MCF 10A (cell line): ENCODE measurements at regions of chr15 and their contacts with region 1.

Region 1: DNA sequence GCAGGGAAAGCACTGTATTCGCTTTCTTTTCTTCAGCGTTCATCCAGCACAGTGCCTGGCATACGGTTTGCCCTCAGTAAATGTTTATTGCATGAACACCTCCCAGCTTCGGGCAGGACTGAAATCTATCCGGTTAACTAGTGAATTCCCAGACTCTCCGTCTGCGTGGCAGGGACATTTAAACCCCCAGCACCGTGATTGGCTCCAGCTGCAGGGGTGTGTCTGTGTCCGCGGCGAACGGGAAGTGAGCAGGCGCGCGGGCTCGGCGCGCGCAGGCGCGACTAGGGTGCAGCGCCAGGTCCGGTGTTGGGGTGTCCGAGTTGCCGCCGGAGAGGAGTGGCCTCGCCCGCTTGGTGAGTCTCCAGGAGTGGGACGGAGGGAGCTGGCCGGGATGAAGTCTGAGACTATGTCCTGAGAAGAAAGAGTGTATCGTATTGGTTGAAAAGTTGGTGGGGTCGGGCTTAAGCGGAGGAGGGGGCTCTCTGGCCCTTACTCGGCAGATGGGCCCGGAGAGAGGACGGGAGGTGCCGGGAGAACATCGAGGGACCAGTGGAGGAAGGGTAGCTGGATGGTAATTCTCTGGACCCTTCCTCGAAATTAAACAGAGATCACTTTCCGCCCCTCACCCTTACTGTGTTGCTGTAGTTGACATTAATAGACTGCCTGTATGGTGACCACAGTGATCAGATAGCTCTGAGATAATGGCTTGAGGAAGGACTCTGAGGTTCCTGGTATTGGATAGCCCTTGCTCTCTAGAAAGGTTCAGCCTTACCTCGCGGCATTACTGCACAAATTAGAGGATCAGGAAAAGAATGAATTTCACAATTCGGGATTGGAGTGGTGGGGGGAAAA is at the start of gene SNAP23:
- DNase-seq: peak; percentile 93
- H3K4me3 Mint-ChIP-seq: peak within 1 kb of the TSS; percentile 87
- H3K27ac Mint-ChIP-seq: peak within 1 kb of the TSS; percentile 95
- H3K4me1 Mint-ChIP-seq: peaks cover 25% of the 10 kb centered on the region
- H3K27me3 Mint-ChIP-seq: no peaks in the 10 kb centered on the region
- CTCF ChIP-seq: no peak
- total RNA-seq, gene SNAP23: 47.4 and 65.7 TPM in 2 replicates

Region 2: GRCh38 chr15:42273102-42273899 is 222.3 kb before region 1 on chr15 and contains the starts of genes GANC and TMEM87A:
- CTCF ChIA-PET with region 1: no interaction called
- POLR2A ChIA-PET with region 1: interaction called, 25 read pairs
- intact Hi-C with region 1: loop called (anchors 10 kb)
- DNase-seq: peak; percentile 98
- H3K4me3 Mint-ChIP-seq: peak within 1 kb of the TSS; percentile 97
- H3K27ac Mint-ChIP-seq: peak within 1 kb of the TSS; percentile 99
- H3K4me1 Mint-ChIP-seq: peaks cover 24% of the 10 kb centered on the region
- H3K27me3 Mint-ChIP-seq: no peaks in the 10 kb centered on the region
- CTCF ChIP-seq: no peak
- total RNA-seq, gene GANC: 24.0 and 31.7 TPM in 2 replicates
- total RNA-seq, gene TMEM87A: 51.3 and 52.3 TPM in 2 replicates

Region 3: GRCh38 chr15:42511010-42511396 is 15.4 kb after region 1 on chr15:
- CTCF ChIA-PET with region 1: interaction called, 4 read pairs
- POLR2A ChIA-PET with region 1: interaction called, 26 read pairs
- intact Hi-C with region 1: no loop called
- DNase-seq: peak; percentile 45
- H3K4me3 Mint-ChIP-seq: no peak overlapping the region
- H3K27ac Mint-ChIP-seq: peak overlapping the region; percentile 82
- H3K4me1 Mint-ChIP-seq: peaks cover 6% of the 10 kb centered on the region
- H3K27me3 Mint-ChIP-seq: no peaks in the 10 kb centered on the region
- CTCF ChIP-seq: no peak

Region 4: DNA sequence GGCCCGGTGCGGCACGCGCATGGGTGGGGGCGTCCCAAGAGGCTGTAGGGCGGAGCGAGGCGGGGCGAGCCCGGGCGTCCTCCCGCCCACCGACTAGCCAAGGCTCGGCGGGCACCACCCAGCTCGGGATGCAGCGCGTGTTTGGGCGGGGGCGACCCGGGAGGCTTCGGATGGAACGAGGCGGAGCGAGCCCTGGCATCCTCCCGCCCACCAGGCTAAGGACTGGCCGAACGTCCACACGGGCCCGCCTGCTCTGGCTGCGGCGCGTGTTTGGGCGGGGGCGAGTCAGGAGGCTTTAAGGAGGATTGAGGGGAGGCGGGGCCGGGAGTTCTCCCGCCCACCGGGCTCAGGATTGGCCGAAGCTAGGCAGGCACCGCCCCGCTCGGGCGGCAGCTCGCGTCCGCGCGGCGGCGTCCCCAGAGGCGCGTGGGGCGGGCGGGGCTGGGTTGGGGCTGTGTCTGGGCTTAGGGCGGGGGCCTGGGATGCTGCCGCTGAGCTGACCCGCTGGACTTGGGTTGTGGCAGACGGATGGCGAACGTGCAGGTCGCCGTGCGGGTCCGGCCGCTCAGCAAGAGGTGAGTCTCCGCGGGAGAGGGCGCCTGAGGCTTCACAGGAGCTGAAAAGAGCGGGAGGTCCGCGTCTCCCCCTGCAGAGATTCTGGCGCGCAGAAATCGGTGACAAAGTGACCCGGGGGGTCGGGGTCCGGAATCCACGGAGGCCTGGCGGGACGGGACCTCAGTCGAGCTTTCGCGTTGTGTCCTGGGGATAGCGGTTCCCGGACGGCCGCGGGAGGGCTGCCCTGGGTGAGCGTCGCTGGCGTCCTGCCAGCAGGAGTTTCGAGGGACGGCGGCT is 79.8 kb after region 1 on chr15 and contains the start of gene STARD9:
- CTCF ChIA-PET with region 1: interaction called, 3 read pairs
- POLR2A ChIA-PET with region 1: interaction called, 10 read pairs
- intact Hi-C with region 1: no loop called
- DNase-seq: peak; percentile 98
- H3K4me3 Mint-ChIP-seq: peak within 1 kb of the TSS; percentile 89
- H3K27ac Mint-ChIP-seq: peak within 1 kb of the TSS; percentile 53
- H3K4me1 Mint-ChIP-seq: peaks cover 7% of the 10 kb centered on the region
- H3K27me3 Mint-ChIP-seq: no peaks in the 10 kb centered on the region
- CTCF ChIP-seq: no peak
- total RNA-seq, gene STARD9: 2.0 and 2.9 TPM in 2 replicates

Region 5: DNA sequence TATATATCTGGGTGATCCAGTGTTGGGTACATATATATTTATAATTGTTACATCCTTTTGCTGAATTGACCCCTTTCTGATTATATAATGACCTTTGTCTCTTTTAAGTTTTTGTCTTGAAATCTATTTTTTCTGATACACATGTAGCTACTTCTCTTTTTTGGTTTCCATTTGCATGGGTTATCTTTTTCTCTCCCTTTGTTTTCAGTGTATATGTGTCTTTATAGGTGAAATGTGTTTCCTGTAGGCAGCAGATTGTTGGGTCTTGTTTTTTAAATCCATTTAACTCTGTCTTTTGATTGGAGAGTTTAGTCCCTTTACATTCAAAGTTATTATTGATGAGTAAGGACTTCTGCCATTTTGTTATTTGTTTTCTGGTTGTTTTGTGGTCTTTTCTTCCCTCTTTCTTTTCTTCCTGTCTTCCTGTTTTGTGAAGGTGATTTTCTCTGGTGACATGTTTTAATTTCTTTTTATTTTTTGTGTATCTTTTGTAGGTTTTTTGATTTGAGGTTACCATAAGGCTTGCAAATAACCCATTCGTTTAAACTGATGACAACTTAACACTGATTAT is 136.6 kb after region 1 on chr15:
- CTCF ChIA-PET with region 1: no interaction called
- POLR2A ChIA-PET with region 1: no interaction called
- intact Hi-C with region 1: no loop called
- DNase-seq: no peak
- H3K4me3 Mint-ChIP-seq: no peak overlapping the region
- H3K27ac Mint-ChIP-seq: no peak overlapping the region
- H3K4me1 Mint-ChIP-seq: no peaks in the 10 kb centered on the region
- H3K27me3 Mint-ChIP-seq: no peaks in the 10 kb centered on the region
- CTCF ChIP-seq: no peak

Region 6: DNA sequence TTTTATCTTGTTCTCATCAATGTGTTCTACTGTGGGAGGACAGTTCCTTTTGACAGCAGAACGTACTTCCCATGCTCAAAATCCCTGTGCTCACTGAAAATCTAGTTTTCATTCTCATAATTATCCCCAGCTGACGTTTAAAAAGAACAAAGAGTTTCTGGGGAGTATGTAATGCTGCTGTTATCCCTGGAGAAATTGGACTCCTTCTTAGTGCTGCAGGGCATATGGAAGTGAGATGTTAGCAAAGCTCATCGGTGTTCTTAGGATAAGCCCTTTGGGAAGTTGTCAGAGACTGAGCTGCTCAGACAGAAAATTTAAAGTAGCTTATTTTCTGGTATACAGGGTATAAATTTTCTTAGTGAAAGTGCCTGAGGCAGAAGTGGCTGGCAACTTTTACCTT is 174.9 kb after region 1 on chr15:
- CTCF ChIA-PET with region 1: no interaction called
- POLR2A ChIA-PET with region 1: interaction called, 15 read pairs
- intact Hi-C with region 1: no loop called
- DNase-seq: no peak
- H3K4me3 Mint-ChIP-seq: no peak overlapping the region
- H3K27ac Mint-ChIP-seq: peak overlapping the region; percentile 93
- H3K4me1 Mint-ChIP-seq: peaks cover 16% of the 10 kb centered on the region
- H3K27me3 Mint-ChIP-seq: no peaks in the 10 kb centered on the region
- CTCF ChIP-seq: no peak

Region 7: GRCh38 chr15:42971830-42972229 is 476.2 kb after region 1 on chr15:
- CTCF ChIA-PET with region 1: no interaction called
- POLR2A ChIA-PET with region 1: no interaction called
- intact Hi-C with region 1: no loop called
- DNase-seq: no peak
- H3K4me3 Mint-ChIP-seq: no peak overlapping the region
- H3K27ac Mint-ChIP-seq: no peak overlapping the region
- H3K4me1 Mint-ChIP-seq: no peaks in the 10 kb centered on the region
- H3K27me3 Mint-ChIP-seq: no peaks in the 10 kb centered on the region
- CTCF ChIP-seq: no peak